Activated CD4-positive, alpha-beta T cell treated with anti-CD3 and anti-CD28 coated beads, Interleukin-2, amount 10 ng/mL, durations not matched to agents 7 days and 5 days (primary cell): ENCODE measurements at regions of chr9 and their contacts with region 1.

Region 1: DNA sequence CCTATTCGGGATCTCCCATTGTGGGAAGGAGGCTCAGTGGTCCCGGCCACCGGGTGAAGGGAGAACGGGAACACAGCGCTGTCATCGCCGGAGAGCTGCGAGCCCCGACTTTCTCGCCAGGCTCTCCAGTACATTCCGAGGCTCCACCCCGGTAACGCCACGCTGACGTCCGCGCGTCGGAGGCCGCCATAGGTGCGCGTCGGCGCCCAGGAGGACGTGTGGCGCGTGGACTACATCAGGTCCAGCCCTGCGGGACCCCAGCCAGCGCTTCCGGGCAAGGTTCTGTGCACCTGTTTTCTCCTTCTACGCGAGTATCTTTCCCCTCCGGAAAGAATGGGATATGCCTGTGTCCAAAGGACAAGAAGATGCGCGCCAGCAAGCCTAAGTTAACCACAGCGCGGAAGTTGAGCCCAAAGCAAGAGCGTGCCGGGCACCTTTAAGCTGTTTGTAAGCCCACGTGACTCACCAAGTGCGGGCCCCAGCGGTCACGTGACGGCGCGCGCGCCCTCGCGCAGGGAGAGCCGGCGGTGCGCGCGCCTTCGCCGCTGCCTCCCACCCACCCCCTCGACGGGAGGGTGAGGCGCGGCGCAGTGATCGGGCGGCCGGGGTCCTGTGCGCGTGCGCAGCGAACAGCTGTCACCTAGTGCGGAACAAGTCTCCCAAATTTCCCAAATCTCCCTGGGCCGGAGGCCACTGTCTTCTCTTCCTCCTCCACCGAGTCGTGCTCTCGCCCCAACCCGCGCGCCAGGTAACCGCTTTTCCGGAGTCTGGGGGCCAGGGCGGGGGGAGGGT is at the start of gene KDM4C:
- DNase-seq: peak; percentile 94
- H3K4me3 Mint-ChIP-seq: peak within 1 kb of the TSS; percentile 86
- H3K27ac Mint-ChIP-seq: peak within 1 kb of the TSS; percentile 100
- H3K4me1 Mint-ChIP-seq: peaks cover 19% of the 10 kb centered on the region
- H3K27me3 Mint-ChIP-seq: no peaks in the 10 kb centered on the region
- total RNA-seq, gene KDM4C: 53.0 to 53.7 TPM

Region 2: DNA sequence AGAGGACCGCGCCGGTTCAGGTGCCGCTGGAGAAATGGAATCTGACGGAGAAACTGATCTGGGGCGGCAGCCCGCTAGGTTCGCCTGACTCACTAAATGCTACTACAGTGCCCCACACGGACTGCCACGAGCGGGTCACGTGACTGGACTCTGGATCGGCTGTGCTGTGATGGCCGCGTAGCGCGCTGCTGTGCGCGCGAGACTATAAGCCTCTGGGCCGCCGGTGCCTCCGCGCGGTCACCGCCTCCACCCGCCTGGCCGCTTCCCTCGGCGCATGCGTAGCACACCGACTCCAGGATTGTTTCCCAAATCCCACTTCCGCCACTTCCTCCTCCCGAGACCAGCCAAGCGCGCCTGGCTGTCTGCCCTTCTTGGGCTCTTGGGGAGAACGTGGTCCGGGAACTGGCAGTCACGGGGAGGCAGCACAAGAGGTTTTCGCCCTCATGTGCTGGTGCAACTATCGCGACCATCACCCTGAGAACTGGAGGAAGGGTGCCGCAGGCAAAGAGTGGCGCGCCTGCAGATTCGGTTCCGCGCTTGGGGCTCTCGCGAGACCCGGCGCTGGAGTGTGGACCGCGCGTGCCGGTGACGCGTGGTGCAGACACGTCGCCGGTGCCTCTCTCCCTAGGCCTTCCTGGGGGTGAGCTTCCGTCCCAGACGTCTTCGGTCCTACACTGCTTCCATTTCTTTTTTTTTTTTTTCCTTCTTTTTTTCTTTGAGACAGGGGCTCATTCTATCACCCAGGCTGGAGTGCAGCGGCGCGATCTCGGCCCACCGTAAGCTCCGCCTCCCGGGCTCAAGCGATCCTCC is 76.3 kb before region 1 on chr9:
- CTCF ChIA-PET with region 1: no interaction called
- POLR2A ChIA-PET with region 1: interaction called, 11 read pairs
- DNase-seq: peak; percentile 94
- H3K4me3 Mint-ChIP-seq: peak overlapping the region; percentile 88
- H3K27ac Mint-ChIP-seq: peak overlapping the region; percentile 99
- H3K4me1 Mint-ChIP-seq: peaks cover 23% of the 10 kb centered on the region
- H3K27me3 Mint-ChIP-seq: no peaks in the 10 kb centered on the region

Region 3: DNA sequence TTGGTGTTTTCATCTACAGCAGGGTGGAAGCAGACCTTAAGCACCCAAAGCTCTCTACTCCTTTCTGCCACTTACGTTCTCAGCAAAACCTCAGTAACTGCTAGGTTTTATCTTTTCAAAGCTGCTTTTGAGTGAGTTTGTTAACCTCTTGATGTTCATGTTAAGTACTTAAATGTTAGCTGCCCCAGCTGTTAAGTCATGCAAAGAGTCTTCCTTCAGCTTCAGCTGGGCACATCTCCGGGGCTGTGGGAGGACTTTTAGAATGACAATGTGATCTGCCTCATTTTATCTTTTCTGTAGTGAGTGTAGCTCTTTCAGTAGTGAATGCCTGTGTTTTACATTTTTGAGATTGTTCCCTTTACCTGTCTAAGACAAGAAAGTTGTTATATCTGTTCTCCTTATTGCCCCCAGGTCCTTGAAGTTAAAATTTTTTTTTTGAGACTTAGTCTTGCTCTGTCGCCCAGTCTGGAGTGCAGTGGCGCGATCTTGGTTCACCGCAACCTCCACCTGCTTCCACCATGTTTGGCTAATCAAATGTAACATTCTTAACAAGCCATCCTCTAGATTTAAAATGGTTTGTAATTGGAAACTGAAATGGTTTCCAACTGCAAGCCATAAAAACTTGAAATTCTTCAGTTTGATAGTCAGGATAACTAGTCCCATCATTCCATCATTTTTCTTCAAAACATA is 19.7 kb after region 1 on chr9:
- CTCF ChIA-PET with region 1: no interaction called
- POLR2A ChIA-PET with region 1: no interaction called
- DNase-seq: no peak
- H3K4me3 Mint-ChIP-seq: no peak overlapping the region
- H3K27ac Mint-ChIP-seq: peak overlapping the region; percentile 41
- H3K4me1 Mint-ChIP-seq: peaks cover 25% of the 10 kb centered on the region
- H3K27me3 Mint-ChIP-seq: no peaks in the 10 kb centered on the region

Region 4: GRCh38 chr9:6811436-6811835 is 53.8 kb after region 1 on chr9:
- CTCF ChIA-PET with region 1: no interaction called
- POLR2A ChIA-PET with region 1: no interaction called
- DNase-seq: no peak
- H3K4me3 Mint-ChIP-seq: no peak overlapping the region
- H3K27ac Mint-ChIP-seq: no peak overlapping the region
- H3K4me1 Mint-ChIP-seq: peaks cover 2% of the 10 kb centered on the region
- H3K27me3 Mint-ChIP-seq: no peaks in the 10 kb centered on the region